ENCODE measurements at regions of chr3 and their contacts with region 1.

Region 1: GRCh38 chr3:56801662-56802377 is at the start of gene ARHGEF3:
- DNase-seq: peak; percentile 89
- H3K4me3 Mint-ChIP-seq: peak within 1 kb of the TSS; percentile 95
- H3K27ac Mint-ChIP-seq: peak within 1 kb of the TSS; percentile 89
- H3K4me1 Mint-ChIP-seq: peaks cover 38% of the 10 kb centered on the region
- H3K27me3 Mint-ChIP-seq: no peaks in the 10 kb centered on the region
- total RNA-seq, gene ARHGEF3: 36.4 to 37.7 TPM

Region 2: GRCh38 chr3:56347219-56347871 is 454.5 kb before region 1 on chr3:
- CTCF ChIA-PET with region 1: no interaction called
- intact Hi-C with region 1: loop called (anchors 5 kb)
- DNase-seq: peak; percentile 70
- H3K4me3 Mint-ChIP-seq: no peak overlapping the region
- H3K27ac Mint-ChIP-seq: no peak overlapping the region
- H3K4me1 Mint-ChIP-seq: no peaks in the 10 kb centered on the region
- H3K27me3 Mint-ChIP-seq: peaks cover 6% of the 10 kb centered on the region

Region 3: GRCh38 chr3:56693750-56694149 is 108.1 kb before region 1 on chr3:
- CTCF ChIA-PET with region 1: interaction called, 19 read pairs
- intact Hi-C with region 1: no loop called
- DNase-seq: no peak
- H3K4me3 Mint-ChIP-seq: peak overlapping the region; percentile 26
- H3K27ac Mint-ChIP-seq: peak overlapping the region; percentile 19
- H3K4me1 Mint-ChIP-seq: peaks cover 40% of the 10 kb centered on the region
- H3K27me3 Mint-ChIP-seq: no peaks in the 10 kb centered on the region

Region 4: DNA sequence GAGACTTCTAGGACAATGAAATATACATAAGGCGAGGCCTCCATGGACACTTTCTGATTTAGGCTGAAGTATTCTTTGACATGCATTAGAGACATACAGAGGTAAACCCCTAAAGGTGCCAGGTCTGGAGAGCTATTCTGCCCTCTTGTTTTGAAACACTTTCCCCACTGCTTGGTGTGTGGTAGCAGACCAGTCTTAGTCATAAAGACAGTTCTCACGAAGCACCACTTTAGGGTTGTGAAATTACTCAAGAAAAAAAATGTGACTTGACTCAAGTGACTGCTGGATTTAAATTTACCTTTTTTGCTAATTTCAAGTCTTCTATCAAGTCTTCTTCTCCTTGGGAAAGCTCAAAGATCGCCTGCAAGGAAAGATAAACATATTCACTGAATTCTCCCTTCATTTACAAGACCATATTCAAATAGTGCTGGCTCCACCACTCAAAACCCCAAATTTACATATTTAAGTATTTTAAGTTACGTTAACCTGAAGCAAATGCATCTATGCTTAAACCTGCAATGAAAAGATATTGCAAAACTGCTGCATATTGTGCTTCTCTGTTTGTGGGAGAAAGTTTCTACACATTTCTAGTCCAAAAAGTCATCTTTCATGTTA is 48.5 kb before region 1 on chr3:
- CTCF ChIA-PET with region 1: interaction called, 83 read pairs
- intact Hi-C with region 1: loop called (anchors 1 kb)
- DNase-seq: peak; percentile 73
- H3K4me3 Mint-ChIP-seq: no peak overlapping the region
- H3K27ac Mint-ChIP-seq: peak overlapping the region; percentile 44
- H3K4me1 Mint-ChIP-seq: peaks cover 56% of the 10 kb centered on the region
- H3K27me3 Mint-ChIP-seq: no peaks in the 10 kb centered on the region

Region 5: DNA sequence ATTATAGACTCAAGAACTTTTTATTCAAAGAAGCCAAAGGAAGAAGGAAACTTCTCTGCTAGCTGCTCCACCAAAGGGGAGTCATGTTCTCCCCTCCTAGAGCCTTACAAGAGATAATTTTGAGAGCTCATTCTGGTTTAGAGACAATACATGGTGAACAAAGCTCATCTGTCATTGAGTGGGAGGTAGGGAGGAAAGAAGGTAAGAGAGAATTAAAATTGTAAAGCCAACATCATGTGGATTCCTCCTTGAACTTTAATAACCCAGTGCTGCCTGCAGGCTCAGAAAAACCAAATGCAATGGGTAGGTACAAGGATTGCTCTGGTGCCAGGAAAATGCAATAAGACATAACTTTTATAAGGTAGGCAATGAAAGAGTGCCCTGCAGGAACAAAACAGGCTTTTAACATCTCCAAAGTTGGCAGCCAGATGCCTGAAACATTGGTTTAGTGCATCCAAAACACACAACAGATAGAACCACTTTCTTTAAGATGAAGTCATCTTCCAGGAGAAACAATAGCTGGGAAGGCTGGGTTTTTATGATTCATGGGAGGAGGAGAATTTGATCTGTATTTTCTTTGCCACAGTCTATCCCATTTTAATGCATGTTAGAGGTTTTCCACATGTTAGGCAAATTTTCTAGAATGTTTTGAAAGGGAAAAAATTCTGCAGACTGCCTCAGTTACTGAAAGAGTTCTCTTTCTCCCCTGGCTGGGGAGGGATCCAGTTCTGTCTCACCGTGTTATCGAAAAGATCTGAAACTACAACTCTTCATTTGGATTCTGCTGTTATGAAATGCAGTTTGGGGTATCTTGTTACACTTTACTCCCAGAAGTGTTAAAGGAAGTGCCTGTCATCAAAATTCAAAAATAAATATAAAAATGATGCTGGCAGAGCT is 11.2 kb after region 1 on chr3:
- CTCF ChIA-PET with region 1: interaction called, 105 read pairs
- intact Hi-C with region 1: no loop called
- DNase-seq: no peak
- H3K4me3 Mint-ChIP-seq: no peak overlapping the region
- H3K27ac Mint-ChIP-seq: peak overlapping the region; percentile 7
- H3K4me1 Mint-ChIP-seq: peaks cover 54% of the 10 kb centered on the region
- H3K27me3 Mint-ChIP-seq: no peaks in the 10 kb centered on the region

Region 6: DNA sequence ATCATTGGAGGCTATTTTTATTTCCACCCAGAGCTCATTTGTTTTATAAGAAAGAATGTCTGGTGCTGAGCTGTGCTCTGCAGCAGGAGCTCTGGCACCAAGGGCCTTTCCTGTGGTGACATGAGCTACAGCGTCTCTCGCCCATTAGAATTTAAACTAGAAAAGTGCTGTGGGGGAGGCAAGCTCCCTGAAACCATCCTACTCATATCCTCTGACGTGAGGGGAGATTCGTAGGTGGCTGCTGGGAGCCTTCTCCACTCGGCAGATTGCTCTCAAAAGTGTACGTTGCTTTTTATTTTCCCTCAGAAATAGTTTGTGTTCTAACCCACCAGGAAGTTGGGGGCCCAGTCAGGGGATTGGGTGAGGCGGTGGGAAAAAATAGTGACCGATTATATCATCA is 76.3 kb after region 1 on chr3:
- CTCF ChIA-PET with region 1: interaction called, 30 read pairs
- intact Hi-C with region 1: no loop called
- DNase-seq: peak; percentile 84
- H3K4me3 Mint-ChIP-seq: peak overlapping the region; percentile 52
- H3K27ac Mint-ChIP-seq: peak overlapping the region; percentile 94
- H3K4me1 Mint-ChIP-seq: peaks cover 90% of the 10 kb centered on the region
- H3K27me3 Mint-ChIP-seq: no peaks in the 10 kb centered on the region

Region 7: DNA sequence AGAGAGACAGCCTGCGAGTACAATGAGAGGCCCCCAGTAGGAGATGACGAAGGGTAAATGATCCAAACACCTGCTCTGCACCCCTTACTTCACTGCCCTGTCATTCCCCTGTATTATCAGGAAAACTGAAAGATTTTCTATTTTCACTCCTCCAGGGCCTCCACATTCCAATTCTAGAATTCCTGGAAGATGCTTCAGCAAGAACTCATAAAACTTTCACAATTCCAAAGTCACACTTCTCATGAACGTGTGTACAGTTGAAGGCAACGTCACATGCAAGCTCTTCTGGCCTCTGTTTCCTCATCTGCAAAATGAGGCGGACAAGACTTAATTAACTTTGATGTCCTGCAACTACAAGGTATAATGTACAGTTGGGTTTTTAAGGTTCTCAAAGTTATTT is 195.9 kb after region 1 on chr3:
- CTCF ChIA-PET with region 1: interaction called, 13 read pairs
- intact Hi-C with region 1: no loop called
- DNase-seq: no peak
- H3K4me3 Mint-ChIP-seq: no peak overlapping the region
- H3K27ac Mint-ChIP-seq: no peak overlapping the region
- H3K4me1 Mint-ChIP-seq: peaks cover 3% of the 10 kb centered on the region
- H3K27me3 Mint-ChIP-seq: no peaks in the 10 kb centered on the region